Psoas muscle (tissue), 8 donors: ENCODE measurements at regions of chr9 and their contacts with region 1.

Region 1: GRCh38 chr9:19127881-19128500 is 699 bp upstream of the PLIN2 start:
- DNase-seq: peak in 1 of 2 donors; percentile 31
- ATAC-seq: peak; percentile 26 to 67 (median 60)
- H3K4me3 ChIP-seq: peak overlapping the region; percentile 97
- H3K27ac ChIP-seq: peak overlapping the region; percentile 100
- H3K4me1 ChIP-seq: peaks cover 43% of the 10 kb centered on the region
- H3K27me3 ChIP-seq: no peaks in the 10 kb centered on the region
- CTCF ChIP-seq: no peak

Region 2: DNA sequence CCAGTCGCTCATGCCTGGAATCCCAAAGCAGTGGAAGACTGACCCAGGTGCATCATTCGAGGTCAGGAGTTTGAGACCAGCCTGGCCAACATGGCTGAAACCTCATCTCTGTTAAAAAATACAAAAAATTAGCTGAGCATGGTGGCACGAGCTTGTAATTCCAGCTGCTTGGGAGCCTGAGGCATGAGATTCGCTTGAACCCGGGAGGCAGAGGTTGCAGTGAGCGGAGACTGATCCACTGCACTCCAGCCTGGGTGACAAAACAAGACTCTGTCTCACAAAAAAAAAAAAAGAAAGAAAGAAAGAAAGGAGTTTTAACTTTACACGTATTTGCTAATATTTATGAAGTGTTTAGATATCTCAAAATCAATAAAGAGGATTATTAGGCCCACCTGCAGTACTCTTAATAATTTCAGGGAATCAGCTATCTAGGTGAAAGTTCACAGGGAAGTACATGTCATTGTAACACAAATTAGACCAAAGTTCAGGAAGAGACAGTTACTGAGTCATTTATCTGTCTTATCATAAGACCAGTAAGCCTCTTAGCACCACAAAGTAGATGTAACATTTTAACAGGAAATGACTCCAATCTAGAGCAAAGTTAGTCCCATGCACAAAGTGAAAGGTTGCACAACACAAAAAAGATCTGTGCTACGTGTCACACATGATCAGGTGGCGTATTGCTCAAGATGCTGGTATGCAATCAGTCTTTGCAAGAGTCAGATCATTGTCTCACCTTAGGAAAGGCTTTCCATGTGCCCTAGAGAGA is 33.5 kb after region 1 on chr9:
- intact Hi-C with region 1: loop called (anchors 5 kb)
- DNase-seq: no peak
- ATAC-seq: peak; percentile 81 to 88 (median 84)
- H3K4me3 ChIP-seq: peak overlapping the region; percentile 34
- H3K27ac ChIP-seq: peak overlapping the region; percentile 90
- H3K4me1 ChIP-seq: peaks cover 17% of the 10 kb centered on the region
- H3K27me3 ChIP-seq: no peaks in the 10 kb centered on the region
- CTCF ChIP-seq: no peak